ENCODE measurements at regions of chr3 and their contacts with region 1.

Region 1: GRCh38 chr3:184811999-184812661 is at the start of gene VPS8:
- DNase-seq: peak; percentile 95
- ATAC-seq: peak; percentile 92
- H3K4me3 Mint-ChIP-seq: peak within 1 kb of the TSS; percentile 96
- H3K27ac Mint-ChIP-seq: peak within 1 kb of the TSS; percentile 96
- H3K4me1 Mint-ChIP-seq: peaks cover 24% of the 10 kb centered on the region
- H3K27me3 Mint-ChIP-seq: no peaks in the 10 kb centered on the region
- CTCF ChIP-seq: no peak
- total RNA-seq, gene VPS8: 57.4 and 68.8 TPM in 2 replicates

Region 2: DNA sequence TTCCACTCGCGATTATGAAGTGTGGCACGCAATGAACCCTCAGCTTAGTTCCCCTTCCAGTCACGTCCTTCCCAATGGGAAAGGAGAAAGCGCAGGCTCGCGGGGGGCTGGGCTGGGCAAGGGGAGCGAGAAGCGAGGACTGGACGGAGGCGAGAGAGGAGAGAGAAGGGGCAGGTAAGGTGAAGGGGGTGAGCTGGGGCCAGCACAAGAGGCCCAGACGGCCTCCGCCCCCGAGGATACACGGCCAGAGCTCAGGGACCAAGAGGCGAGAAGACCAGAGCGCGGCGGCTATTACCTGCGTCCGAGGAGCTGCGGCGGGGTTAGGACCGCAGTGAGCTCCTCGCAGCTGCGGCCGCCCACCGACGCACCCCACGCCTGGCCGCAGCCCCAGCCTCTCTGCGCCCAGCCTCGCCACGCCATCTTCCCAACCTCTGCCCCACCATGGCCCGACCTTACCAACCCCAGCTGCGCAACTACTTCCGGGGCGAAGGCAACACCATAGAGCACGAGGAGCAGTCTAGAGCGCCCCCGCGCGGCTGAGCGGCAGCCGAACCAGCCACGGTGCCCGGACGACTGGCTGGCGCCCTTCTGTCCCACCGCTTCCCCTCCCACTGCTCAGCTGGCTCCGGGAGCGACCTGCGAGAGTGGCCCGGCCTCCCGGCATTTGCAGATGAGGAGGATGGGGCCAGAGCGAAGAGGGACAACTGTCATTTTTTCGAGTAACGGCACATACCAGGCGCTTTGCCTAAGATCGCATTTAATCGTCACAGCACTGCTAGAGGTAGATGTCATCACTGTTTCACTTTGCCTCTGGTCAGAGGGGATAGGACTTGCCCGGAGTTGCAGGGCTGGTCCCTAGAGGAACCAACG is 927.5 kb before region 1 on chr3 and contains the start of gene PARL:
- CTCF ChIA-PET with region 1: no interaction called
- POLR2A ChIA-PET with region 1: no interaction called
- intact Hi-C with region 1: loop called (anchors 10 kb)
- DNase-seq: peak; percentile 94
- ATAC-seq: peak; percentile 99
- H3K4me3 Mint-ChIP-seq: peak within 1 kb of the TSS; percentile 98
- H3K27ac Mint-ChIP-seq: peak within 1 kb of the TSS; percentile 85
- H3K4me1 Mint-ChIP-seq: peaks cover 36% of the 10 kb centered on the region
- H3K27me3 Mint-ChIP-seq: peaks cover 2% of the 10 kb centered on the region
- CTCF ChIP-seq: no peak
- total RNA-seq, gene PARL: 57.6 and 57.8 TPM in 2 replicates

Region 3: GRCh38 chr3:184561061-184561912 is 250.8 kb before region 1 on chr3 and contains the start of gene EPHB3:
- CTCF ChIA-PET with region 1: interaction called, 6 read pairs
- POLR2A ChIA-PET with region 1: interaction called, 5 read pairs
- intact Hi-C with region 1: loop called (anchors 1 kb)
- DNase-seq: peak; percentile 89
- ATAC-seq: peak; percentile 93
- H3K4me3 Mint-ChIP-seq: peak within 1 kb of the TSS; percentile 77
- H3K27ac Mint-ChIP-seq: no peak within 1 kb of the TSS
- H3K4me1 Mint-ChIP-seq: peaks cover 15% of the 10 kb centered on the region
- H3K27me3 Mint-ChIP-seq: peaks cover 40% of the 10 kb centered on the region
- CTCF ChIP-seq: peak; percentile 67
- total RNA-seq, gene EPHB3: 0.05 and 0.07 TPM in 2 replicates